HCT116 (cell line): ENCODE measurements at regions of chr1 and their contacts with region 1.

Region 1: GRCh38 chr1:10387413-10388079 is 11.3 kb upstream of the PGD start:
- DNase-seq: no peak
- ATAC-seq: 0 out of 2 replicates have a peak, but pooled peaks have one; percentile 14
- H3K4me3 ChIP-seq: no peak overlapping the region
- H3K27ac ChIP-seq: peak overlapping the region; percentile 35; the same call in 1 of the 2 replicates
- H3K4me1 ChIP-seq: peaks cover 5 to 9% of the 10 kb centered on the region in 2 experiments; a peak in 3 of 4 replicates
- H3K27me3 ChIP-seq: no peaks in the 10 kb centered on the region
- CTCF ChIP-seq: no peak
- POLR2A ChIP-seq: no peak
- RAD21 ChIP-seq: no peak

Region 2: DNA sequence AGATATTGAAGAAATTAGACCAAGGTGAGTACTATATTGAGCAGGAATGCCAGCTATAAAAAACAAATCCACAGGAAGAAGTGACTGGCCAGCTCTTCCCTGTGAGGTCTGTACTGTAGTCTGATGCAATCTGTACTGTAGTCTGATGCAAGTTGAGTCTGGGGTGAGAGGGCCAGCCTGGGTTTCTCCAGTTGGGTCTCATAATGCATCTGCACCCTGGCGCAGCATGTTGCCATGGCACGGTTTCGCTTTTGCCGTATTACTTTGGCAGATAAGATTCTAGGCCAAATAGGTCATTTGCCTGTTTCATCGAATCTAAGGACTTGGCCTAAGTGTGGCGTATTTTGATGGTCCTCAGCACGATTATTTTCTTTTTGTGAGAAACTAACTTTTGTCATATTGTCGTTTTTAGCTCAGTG is 13.1 kb before region 1 on chr1:
- CTCF ChIA-PET with region 1: no interaction called
- POLR2A ChIA-PET with region 1: no interaction called
- RAD21 ChIA-PET with region 1: no interaction called
- intact Hi-C with region 1: no loop called
- DNase-seq: no peak
- ATAC-seq: no peak
- H3K4me3 ChIP-seq: no peak overlapping the region
- H3K27ac ChIP-seq: no peak overlapping the region
- H3K4me1 ChIP-seq: no peaks in the 10 kb centered on the region
- H3K27me3 ChIP-seq: no peaks in the 10 kb centered on the region
- CTCF ChIP-seq: no peak
- POLR2A ChIP-seq: no peak
- RAD21 ChIP-seq: no peak

Region 3: GRCh38 chr1:10398734-10399623 is 11.4 kb after region 1 on chr1 and contains the start of gene PGD:
- CTCF ChIA-PET with region 1: interaction called, 8 read pairs
- POLR2A ChIA-PET with region 1: interaction called, 11 read pairs
- RAD21 ChIA-PET with region 1: no interaction called
- intact Hi-C with region 1: no loop called
- DNase-seq: peak; percentile 92
- ATAC-seq: peak; percentile 95
- H3K4me3 ChIP-seq: peak within 1 kb of the TSS; percentile 53 to 82
- H3K27ac ChIP-seq: peak within 1 kb of the TSS; percentile 94
- H3K4me1 ChIP-seq: peaks cover 6 to 23% of the 10 kb centered on the region in 2 experiments; a peak in 3 of 4 replicates
- H3K27me3 ChIP-seq: no peaks in the 10 kb centered on the region
- CTCF ChIP-seq: no peak
- POLR2A ChIP-seq: peak; percentile 76
- RAD21 ChIP-seq: no peak
- total RNA-seq, gene PGD: 144 TPM